ENCODE measurements at regions of chr13 and their contacts with region 1.

Region 1: GRCh38 chr13:23871616-23872220 is 17.5 kb downstream of the MIPEP start:
- DNase-seq: peak in 2 of 9 experiments; percentile 13 to 37
- ATAC-seq: no peak
- H3K4me3 ChIP-seq: no peak overlapping the region
- H3K4me3 Mint-ChIP-seq: no peak overlapping the region
- H3K27ac ChIP-seq: no peak overlapping the region
- H3K27ac Mint-ChIP-seq: no peak overlapping the region
- H3K4me1 ChIP-seq: no peaks in the 10 kb centered on the region
- H3K4me1 Mint-ChIP-seq: no peaks in the 10 kb centered on the region
- H3K27me3 ChIP-seq: no peaks in the 10 kb centered on the region
- H3K27me3 Mint-ChIP-seq: no peaks in the 10 kb centered on the region
- CTCF ChIP-seq: peak; percentile 73

Region 2: DNA sequence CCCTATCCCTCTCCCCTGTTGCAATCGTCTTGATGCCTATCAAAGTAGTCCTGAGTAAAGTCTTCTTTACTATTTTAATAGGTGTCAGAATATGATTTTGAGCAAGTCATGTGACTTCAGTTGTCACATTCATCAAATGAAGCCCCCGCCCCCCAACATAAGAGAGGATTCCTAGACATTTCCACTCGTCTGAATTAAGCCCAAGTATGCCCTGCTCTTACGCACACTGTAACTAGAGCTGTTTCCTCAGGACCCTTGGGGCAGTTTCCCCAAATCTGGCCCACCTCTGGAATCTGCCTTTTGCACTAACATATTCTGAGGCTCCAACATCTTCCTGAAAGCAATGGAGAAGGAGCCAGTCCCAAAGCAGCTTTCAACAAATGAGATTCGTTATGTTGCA is 463.7 kb before region 1 on chr13:
- CTCF ChIA-PET with region 1: interaction called, 3 read pairs
- POLR2A ChIA-PET with region 1: no interaction called
- intact Hi-C with region 1: loop called in 1 of 2 experiments (anchors 5 kb)
- DNase-seq: no peak
- ATAC-seq: no peak
- H3K4me3 ChIP-seq: no peak overlapping the region
- H3K4me3 Mint-ChIP-seq: no peak overlapping the region
- H3K27ac ChIP-seq: no peak overlapping the region
- H3K27ac Mint-ChIP-seq: no peak overlapping the region
- H3K4me1 ChIP-seq: no peaks in the 10 kb centered on the region
- H3K4me1 Mint-ChIP-seq: peaks cover 3% of the 10 kb centered on the region
- H3K27me3 ChIP-seq: no peaks in the 10 kb centered on the region
- H3K27me3 Mint-ChIP-seq: peaks cover 11% of the 10 kb centered on the region
- CTCF ChIP-seq: no peak

Region 3: DNA sequence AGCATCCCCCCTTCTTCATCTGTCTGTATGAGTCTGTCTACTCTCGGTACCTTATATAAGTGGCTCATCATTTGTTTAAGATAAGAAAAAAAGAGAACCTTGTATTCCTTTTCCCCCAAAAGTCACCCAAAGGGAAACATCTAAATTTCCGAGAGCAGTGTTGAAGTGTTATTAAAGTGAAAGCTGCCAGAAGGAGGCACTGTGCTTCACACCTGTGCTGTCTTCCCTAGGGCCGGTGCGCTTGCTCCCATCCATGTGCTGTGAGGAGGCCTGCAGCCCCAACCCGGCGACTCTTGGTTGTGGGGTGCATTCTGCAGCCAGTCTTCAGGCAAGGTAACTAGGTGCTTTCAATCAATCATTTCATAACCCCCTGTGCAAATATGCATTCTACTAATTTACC is 204.0 kb before region 1 on chr13:
- CTCF ChIA-PET with region 1: no interaction called
- POLR2A ChIA-PET with region 1: no interaction called
- intact Hi-C with region 1: loop called (anchors 2 kb)
- DNase-seq: peak in 1 of 9 experiments; percentile 16
- ATAC-seq: no peak
- H3K4me3 ChIP-seq: no peak overlapping the region
- H3K4me3 Mint-ChIP-seq: no peak overlapping the region
- H3K27ac ChIP-seq: no peak overlapping the region
- H3K27ac Mint-ChIP-seq: no peak overlapping the region
- H3K4me1 ChIP-seq: no peaks in the 10 kb centered on the region
- H3K4me1 Mint-ChIP-seq: no peaks in the 10 kb centered on the region
- H3K27me3 ChIP-seq: no peaks in the 10 kb centered on the region
- H3K27me3 Mint-ChIP-seq: peaks cover 5% of the 10 kb centered on the region
- CTCF ChIP-seq: no peak

Region 4: GRCh38 chr13:24008679-24009078 is 137.0 kb after region 1 on chr13:
- CTCF ChIA-PET with region 1: no interaction called
- POLR2A ChIA-PET with region 1: no interaction called
- intact Hi-C with region 1: no loop called
- DNase-seq: no peak
- ATAC-seq: no peak
- H3K4me3 ChIP-seq: no peak overlapping the region
- H3K4me3 Mint-ChIP-seq: no peak overlapping the region
- H3K27ac ChIP-seq: no peak overlapping the region
- H3K27ac Mint-ChIP-seq: no peak overlapping the region
- H3K4me1 ChIP-seq: no peaks in the 10 kb centered on the region
- H3K4me1 Mint-ChIP-seq: no peaks in the 10 kb centered on the region
- H3K27me3 ChIP-seq: no peaks in the 10 kb centered on the region
- H3K27me3 Mint-ChIP-seq: peaks cover 7% of the 10 kb centered on the region
- CTCF ChIP-seq: no peak

Region 5: DNA sequence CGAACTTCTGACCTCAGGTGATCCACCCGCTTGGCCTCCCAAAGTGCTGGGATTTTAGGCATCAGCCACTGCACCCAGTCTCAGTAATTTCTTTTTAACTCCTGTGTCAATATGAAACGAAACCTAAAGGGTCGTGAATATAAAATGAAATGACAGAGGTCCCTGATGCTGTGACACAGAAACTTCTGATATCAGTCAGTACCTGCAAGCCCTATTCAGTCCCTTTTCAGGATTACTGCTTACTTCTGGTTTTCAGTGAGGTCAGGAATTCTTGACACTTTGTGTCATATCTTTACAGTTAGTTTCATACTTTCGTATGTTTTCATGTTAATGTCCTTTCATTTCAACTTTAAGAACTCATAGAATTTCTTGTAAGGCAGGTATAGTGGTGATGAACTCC is 950.9 kb after region 1 on chr13:
- CTCF ChIA-PET with region 1: no interaction called
- POLR2A ChIA-PET with region 1: no interaction called
- intact Hi-C with region 1: no loop called
- DNase-seq: no peak
- ATAC-seq: no peak
- H3K4me3 ChIP-seq: no peak overlapping the region
- H3K4me3 Mint-ChIP-seq: no peak overlapping the region
- H3K27ac ChIP-seq: no peak overlapping the region
- H3K27ac Mint-ChIP-seq: no peak overlapping the region
- H3K4me1 ChIP-seq: no peaks in the 10 kb centered on the region
- H3K4me1 Mint-ChIP-seq: no peaks in the 10 kb centered on the region
- H3K27me3 ChIP-seq: no peaks in the 10 kb centered on the region
- H3K27me3 Mint-ChIP-seq: peaks cover 22% of the 10 kb centered on the region
- CTCF ChIP-seq: no peak